ENCODE measurements at regions of chr6 and their contacts with region 1.

Region 1: GRCh38 chr6:90285611-90286381 is 10.8 kb downstream of the BACH2 start:
- DNase-seq: peak; percentile 75
- H3K4me3 Mint-ChIP-seq: peak overlapping the region; percentile 63
- H3K27ac Mint-ChIP-seq: peak overlapping the region; percentile 81
- H3K4me1 Mint-ChIP-seq: peaks cover 62% of the 10 kb centered on the region
- H3K27me3 Mint-ChIP-seq: peaks cover 12% of the 10 kb centered on the region

Region 2: DNA sequence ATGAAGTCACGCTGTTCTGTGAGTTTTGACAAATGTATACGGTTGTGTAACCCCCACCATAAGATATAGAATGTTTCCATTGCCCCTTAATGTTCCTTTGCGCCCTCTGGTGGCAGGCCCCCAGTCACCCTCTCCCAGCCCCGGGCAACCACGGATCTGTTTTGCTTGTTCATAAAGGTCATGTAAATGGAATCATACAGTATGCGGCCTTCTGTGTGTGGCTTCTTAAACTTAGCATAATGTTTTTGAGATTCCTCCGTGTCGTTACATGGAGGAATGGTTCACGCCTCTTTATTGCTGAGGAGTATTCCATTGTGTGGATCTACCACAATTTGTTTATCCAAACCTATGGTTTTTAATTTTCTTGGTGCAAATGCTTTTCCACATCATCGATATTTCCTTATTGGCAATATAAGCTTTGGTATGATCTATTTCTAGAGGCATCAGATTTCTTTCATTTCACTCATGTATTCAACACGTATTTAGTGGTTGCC is 675.6 kb before region 1 on chr6:
- CTCF ChIA-PET with region 1: no interaction called
- POLR2A ChIA-PET with region 1: no interaction called
- DNase-seq: peak; percentile 78
- H3K4me3 Mint-ChIP-seq: no peak overlapping the region
- H3K27ac Mint-ChIP-seq: no peak overlapping the region
- H3K4me1 Mint-ChIP-seq: peaks cover 18% of the 10 kb centered on the region
- H3K27me3 Mint-ChIP-seq: no peaks in the 10 kb centered on the region

Region 3: GRCh38 chr6:90083891-90084290 is 201.9 kb before region 1 on chr6:
- CTCF ChIA-PET with region 1: interaction called, 5 read pairs
- POLR2A ChIA-PET with region 1: interaction called, 26 read pairs
- DNase-seq: peak; percentile 71
- H3K4me3 Mint-ChIP-seq: peak overlapping the region; percentile 43
- H3K27ac Mint-ChIP-seq: peak overlapping the region; percentile 64
- H3K4me1 Mint-ChIP-seq: peaks cover 75% of the 10 kb centered on the region
- H3K27me3 Mint-ChIP-seq: peaks cover 35% of the 10 kb centered on the region

Region 4: DNA sequence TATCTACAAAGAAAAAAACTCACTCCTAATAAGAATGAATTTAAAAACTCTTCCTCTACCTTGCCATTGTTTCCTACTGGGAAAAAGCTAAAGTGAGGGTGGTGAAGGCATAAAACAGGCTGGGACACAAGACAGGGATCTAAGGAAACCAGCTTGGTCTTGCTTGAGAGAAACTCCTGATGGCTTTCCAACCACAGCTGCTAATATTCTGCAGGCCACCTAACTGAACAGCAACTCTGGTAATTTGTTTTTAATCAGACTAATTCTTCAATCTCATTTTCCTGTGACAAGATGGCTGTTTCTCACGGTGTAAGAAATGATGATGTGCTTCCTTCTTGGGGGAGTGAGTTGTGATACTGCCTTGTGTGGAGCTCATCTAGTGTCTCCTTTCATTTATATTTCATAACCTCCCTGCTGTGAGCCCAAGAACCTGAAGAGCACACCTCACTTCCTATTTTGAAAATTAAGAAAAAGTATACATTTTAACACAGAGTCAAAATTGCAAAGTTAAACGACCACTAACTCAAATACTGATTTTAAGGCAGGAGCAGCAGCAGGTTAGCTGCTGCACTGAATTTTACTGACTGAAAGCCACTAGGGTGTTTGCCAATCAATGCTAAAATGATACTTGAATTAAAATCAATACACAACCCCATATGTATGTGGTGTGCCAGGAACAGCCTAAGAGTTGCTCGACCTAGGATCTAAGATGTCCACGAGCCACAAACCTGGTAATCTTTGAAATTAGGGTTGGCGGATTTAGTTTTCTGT is 47.1 kb before region 1 on chr6:
- CTCF ChIA-PET with region 1: interaction called, 4 read pairs
- POLR2A ChIA-PET with region 1: interaction called, 11 read pairs
- DNase-seq: no peak
- H3K4me3 Mint-ChIP-seq: no peak overlapping the region
- H3K27ac Mint-ChIP-seq: no peak overlapping the region
- H3K4me1 Mint-ChIP-seq: peaks cover 61% of the 10 kb centered on the region
- H3K27me3 Mint-ChIP-seq: no peaks in the 10 kb centered on the region

Region 5: DNA sequence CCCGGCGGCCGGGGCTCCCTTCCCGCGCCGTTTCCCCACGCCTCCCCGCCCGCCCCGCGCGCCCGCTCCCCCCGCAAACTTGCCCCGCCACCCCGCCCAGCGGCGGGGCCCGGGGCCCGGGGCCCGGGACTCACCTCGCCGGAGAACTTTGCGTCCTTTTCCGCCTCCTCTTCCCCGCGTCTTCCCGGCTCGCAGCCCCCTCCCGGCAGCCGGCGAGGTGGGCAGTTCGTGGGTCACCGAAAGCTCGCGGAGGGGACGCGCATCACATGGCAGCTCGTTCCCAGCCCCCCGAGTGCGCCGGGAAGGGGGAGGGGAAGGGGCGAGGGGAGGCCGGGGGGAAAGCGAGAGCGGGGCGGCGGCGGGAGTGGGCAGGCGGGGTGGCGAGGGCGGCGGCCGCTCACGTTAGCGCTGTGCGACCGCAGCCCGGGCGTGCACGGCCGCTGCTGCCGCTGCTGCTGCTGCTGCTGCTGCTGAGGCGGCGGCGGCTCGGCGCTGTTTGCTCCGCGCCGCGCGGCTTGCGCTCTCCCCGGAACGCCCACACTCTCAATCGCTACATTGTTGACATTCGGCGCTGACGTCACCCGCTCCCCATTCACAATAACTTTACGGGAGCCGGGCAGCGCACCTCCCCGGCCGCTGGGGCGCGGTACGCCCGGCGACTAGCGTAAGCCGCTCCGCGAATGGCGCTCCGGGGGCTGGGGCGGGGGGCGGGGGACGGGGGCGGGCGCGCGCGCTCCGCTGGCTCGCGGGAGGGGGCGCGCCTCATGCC is 10.7 kb after region 1 on chr6 and contains the start of gene BACH2:
- CTCF ChIA-PET with region 1: interaction called, 17 read pairs
- POLR2A ChIA-PET with region 1: interaction called, 101 read pairs
- DNase-seq: peak; percentile 95
- H3K4me3 Mint-ChIP-seq: peak within 1 kb of the TSS; percentile 87
- H3K27ac Mint-ChIP-seq: peak within 1 kb of the TSS; percentile 82
- H3K4me1 Mint-ChIP-seq: peaks cover 27% of the 10 kb centered on the region
- H3K27me3 Mint-ChIP-seq: peaks cover 44% of the 10 kb centered on the region
- total RNA-seq, gene BACH2: 30.3 to 31.1 TPM

Region 6: GRCh38 chr6:90403489-90404381 is 117.9 kb after region 1 on chr6:
- CTCF ChIA-PET with region 1: interaction called, 11 read pairs
- POLR2A ChIA-PET with region 1: interaction called, 25 read pairs
- DNase-seq: no peak
- H3K4me3 Mint-ChIP-seq: peak overlapping the region; percentile 10
- H3K27ac Mint-ChIP-seq: peak overlapping the region; percentile 94
- H3K4me1 Mint-ChIP-seq: peaks cover 86% of the 10 kb centered on the region
- H3K27me3 Mint-ChIP-seq: peaks cover 5% of the 10 kb centered on the region

Region 7: GRCh38 chr6:90425161-90425641 is 139.4 kb after region 1 on chr6:
- CTCF ChIA-PET with region 1: interaction called, 6 read pairs
- POLR2A ChIA-PET with region 1: interaction called, 15 read pairs
- DNase-seq: peak; percentile 33
- H3K4me3 Mint-ChIP-seq: peak overlapping the region; percentile 72
- H3K27ac Mint-ChIP-seq: peak overlapping the region; percentile 91
- H3K4me1 Mint-ChIP-seq: peaks cover 25% of the 10 kb centered on the region
- H3K27me3 Mint-ChIP-seq: no peaks in the 10 kb centered on the region

Region 8: DNA sequence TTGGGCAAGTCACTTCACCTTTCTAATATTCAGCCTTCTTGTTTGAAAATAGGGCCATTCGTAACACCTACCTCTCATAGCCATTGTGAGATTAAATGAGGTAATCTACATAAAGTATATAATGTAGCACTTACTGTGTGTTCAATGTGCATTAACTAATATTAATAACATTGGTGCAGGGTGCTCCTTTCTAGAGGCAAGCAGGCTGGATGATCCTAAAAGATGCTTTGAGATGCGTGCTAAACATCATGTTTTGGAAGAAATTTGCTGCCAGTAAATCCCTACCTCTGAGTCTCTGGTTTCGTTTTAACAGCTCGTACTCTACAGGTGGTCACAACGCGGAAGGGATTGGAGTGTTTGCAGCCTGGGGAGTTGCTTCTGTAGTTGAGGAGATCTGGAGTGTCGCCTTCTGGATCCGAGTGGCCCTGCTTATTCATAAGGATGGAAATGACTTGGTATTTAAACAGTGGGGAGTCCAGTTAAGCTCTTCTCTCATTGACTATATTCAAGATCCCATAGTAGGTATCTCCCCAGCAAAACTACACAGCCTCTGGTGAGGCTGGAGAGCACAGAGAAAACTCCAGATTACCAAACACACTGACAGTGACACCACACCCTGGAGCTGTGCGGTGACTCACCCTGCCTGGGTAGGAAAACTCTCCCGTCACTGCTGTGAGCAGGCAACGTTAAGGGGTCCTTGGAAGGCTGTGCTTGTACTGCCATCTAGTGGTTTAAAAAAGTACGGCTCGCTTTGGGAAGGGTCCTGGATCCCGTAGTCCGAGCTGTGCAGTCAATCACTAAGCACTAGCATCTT is 193.2 kb after region 1 on chr6:
- CTCF ChIA-PET with region 1: interaction called, 281 read pairs
- POLR2A ChIA-PET with region 1: interaction called, 110 read pairs
- DNase-seq: peak; percentile 85
- H3K4me3 Mint-ChIP-seq: no peak overlapping the region
- H3K27ac Mint-ChIP-seq: peak overlapping the region; percentile 67
- H3K4me1 Mint-ChIP-seq: peaks cover 54% of the 10 kb centered on the region
- H3K27me3 Mint-ChIP-seq: peaks cover 2% of the 10 kb centered on the region